Dorsolateral prefrontal cortex (tissue), 120 donors: ENCODE measurements at regions of chr19 and their contacts with region 1.

Region 1: DNA sequence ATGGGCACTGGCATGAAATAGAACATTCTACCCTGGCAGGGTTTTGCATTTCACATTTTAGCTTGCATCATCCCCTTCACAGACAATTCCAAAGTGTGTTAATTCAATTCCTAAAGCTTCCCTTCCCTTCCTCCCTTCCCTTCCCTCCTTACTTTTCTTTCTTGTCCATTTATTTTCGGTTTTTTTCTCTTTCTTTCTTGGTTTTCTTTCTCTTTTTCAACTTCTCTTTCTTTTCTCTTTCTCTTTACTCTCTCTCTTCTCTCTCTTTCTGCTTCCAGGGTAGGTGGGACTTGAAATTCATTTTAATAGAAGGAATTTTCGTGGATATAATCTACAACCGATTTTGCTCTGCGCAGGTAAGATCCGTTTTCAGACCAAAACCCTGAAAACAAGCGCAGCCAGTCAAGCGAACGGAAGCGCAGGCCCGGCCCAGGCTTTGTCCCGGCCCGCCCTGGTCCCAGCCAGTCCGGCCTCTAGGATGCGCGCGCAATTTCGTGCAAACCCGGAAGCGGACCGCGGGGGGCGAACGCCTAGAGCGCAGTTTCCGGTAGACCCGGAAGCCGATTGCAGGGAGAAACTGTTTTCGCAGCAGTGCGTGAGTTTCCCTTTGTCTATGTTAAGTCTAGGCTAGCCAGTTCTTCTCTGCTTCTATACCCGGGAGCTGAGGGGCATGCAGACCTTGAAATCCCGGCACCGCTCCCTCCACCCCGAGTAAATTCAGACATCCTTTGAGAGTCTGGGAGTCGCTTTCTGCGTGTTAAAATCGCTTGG is at the start of gene ZNF528:
- DNase-seq: peak; percentile 87 to 95 (median 93)
- H3K4me3 ChIP-seq: peak within 1 kb of the TSS; percentile 57 to 97 (median 84)
- H3K27ac ChIP-seq: peak within 1 kb of the TSS in 54 of 59 donors; percentile 18 to 85 (median 68)
- H3K27me3 ChIP-seq: no peaks in the 10 kb centered on the region
- CTCF ChIP-seq: peak in 24 of 56 donors; percentile 4 to 52 (median 26)
- total RNA-seq, gene ZNF528: 47.0 to 103 (median 71.7) TPM

Region 2: DNA sequence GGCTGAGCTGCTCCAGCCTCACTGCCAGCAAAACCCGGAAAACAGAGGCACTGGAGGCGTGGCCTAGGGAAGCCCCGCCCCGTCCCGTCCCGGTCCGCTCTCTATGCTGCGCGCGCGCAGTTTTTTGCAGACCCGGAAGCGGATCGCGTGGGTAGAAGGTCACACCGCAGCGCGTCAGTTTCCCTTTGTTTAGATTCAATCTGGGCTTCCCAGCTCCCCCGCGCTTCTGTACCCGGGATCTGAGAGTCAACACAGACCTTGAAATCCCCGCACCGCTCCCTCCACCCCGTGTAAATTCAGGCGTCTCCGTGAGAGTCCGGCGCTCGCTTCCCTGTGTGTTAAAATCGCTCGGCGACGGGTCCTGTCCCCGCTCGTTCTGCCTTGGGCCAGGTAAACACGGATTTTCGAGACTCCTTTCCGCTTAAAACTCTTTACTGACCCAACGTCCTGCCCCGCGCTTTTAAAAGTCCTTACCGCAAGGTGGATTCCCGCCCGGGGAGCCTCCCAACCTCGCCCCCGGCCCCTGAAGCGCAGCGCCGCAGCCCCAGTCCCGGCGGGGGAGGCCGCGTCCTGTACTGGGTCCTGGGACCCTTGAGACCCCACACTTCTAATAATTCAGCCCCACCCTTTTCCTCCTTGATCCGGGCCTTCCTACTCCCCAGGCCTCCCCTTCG is 61.2 kb before region 1 on chr19 and contains the start of gene ZNF610:
- intact Hi-C with region 1: loop called in 1 of 2 experiments (anchors 5 kb)
- DNase-seq: peak; percentile 84 to 96 (median 90)
- H3K4me3 ChIP-seq: peak within 1 kb of the TSS; percentile 55 to 97 (median 85)
- H3K27ac ChIP-seq: peak within 1 kb of the TSS in 54 of 59 donors; percentile 34 to 91 (median 78)
- H3K27me3 ChIP-seq: no peaks in the 10 kb centered on the region
- CTCF ChIP-seq: peak in 10 of 56 donors; percentile 17 to 42 (median 26)
- total RNA-seq, gene ZNF610: 4.9 to 19.2 (median 10.9) TPM

Region 3: DNA sequence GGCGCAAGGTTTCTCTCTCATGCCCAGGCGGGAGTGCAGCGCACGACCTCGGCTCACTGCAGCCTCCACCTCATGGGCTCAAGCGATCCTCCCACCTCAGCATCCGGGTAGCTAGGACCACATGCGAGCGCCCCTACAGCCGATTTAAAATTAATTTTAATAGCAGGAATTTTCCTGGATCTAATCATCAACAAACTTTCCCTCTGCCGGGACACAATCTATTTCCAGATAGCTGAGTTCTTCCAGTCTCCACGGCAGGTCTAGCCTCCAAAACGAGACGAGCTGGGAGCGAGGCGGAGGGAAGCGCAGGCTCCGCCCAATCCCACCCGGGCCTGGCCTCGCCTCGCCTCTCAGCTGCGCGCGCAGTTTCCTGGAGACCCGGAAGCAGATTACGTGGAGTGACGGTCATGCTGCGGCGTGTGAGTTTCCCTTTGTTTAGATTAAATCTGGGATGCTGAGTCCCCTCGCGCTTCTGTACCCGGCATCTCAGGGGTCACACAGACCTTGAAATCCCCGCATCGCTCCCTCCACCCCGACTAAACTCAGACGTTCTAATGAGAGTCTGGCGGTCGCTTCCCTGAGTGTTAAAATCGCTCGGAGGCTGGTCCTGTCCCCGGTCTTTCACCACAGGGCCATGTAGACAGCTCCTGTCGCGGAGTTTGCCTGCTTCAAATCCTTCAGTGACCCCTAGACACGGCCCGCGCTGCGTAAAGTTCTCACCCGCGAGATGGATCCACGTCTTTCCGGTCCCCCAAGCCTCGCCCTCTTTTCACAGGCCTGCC is 27.7 kb before region 1 on chr19 and contains the start of gene ZNF880:
- intact Hi-C with region 1: loop called in 1 of 2 experiments (anchors 2 kb)
- DNase-seq: peak; percentile 83 to 95 (median 93)
- H3K4me3 ChIP-seq: peak within 1 kb of the TSS; percentile 57 to 96 (median 82)
- H3K27ac ChIP-seq: peak within 1 kb of the TSS; percentile 38 to 96 (median 86)
- H3K27me3 ChIP-seq: no peaks in the 10 kb centered on the region
- CTCF ChIP-seq: peak in 23 of 56 donors; percentile 2 to 52 (median 24)
- total RNA-seq, gene ZNF880: 22.0 to 43.6 (median 31.5) TPM

Region 4: GRCh38 chr19:52453324-52454094 is 56.0 kb after region 1 on chr19 and contains the start of gene ZNF578:
- intact Hi-C with region 1: loop called in 1 of 2 experiments (anchors 5 kb)
- DNase-seq: peak in 9 of 10 donors; percentile 35 to 78 (median 67)
- H3K4me3 ChIP-seq: peak within 1 kb of the TSS; percentile 29 to 83 (median 63)
- H3K27ac ChIP-seq: no peak within 1 kb of the TSS
- H3K27me3 ChIP-seq: no peaks in the 10 kb centered on the region
- CTCF ChIP-seq: peak in 1 of 56 donors; percentile 7
- total RNA-seq, gene ZNF578: 1.8 to 7.7 (median 3.4) TPM